Activated CD8-positive, alpha-beta T cell treated with anti-CD3 and anti-CD28 coated beads for 36 hours (primary cell): ENCODE measurements at regions of chr7 and their contacts with region 1.

Region 1: GRCh38 chr7:27160546-27161213 is 4.2 kb upstream of the HOXA7 start:
- DNase-seq: peak; percentile 89
- ATAC-seq: peak; percentile 78
- H3K4me3 Mint-ChIP-seq: peak overlapping the region; percentile 59
- H3K27ac Mint-ChIP-seq: no peak overlapping the region
- H3K4me1 Mint-ChIP-seq: peaks cover 27% of the 10 kb centered on the region
- H3K27me3 Mint-ChIP-seq: peaks cover 79% of the 10 kb centered on the region
- CTCF ChIP-seq: peak; percentile 98

Region 2: DNA sequence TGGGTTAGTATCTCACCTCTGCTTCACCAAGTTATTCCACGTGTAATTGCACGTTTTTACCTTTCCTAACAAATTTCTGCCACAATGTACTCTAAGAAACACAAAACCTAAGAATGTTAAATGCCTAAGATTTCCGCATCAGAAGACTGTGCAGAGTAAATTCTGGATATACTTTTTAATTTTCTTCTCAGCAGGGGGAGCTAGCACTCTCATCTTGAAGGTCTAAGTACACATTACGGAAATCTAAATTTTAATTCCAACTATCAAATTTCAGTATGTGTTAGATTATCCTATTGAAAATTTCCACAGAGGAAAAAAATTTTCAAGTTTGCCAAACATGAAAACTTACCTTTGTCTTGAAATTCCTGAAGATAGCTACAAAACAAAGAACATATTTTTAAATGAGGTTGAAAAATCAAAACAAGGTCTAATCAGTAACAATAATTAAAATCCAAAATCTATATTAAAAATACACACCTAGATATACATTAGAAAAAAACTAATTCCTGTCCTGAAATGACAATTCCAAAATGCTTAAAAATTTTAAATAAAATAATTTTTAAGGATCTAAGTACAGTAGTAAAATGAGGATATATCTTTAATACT is 306.8 kb before region 1 on chr7:
- CTCF ChIA-PET with region 1: interaction called, 6 read pairs
- POLR2A ChIA-PET with region 1: no interaction called
- intact Hi-C with region 1: loop called (anchors 2 kb)
- DNase-seq: no peak
- ATAC-seq: no peak
- H3K4me3 Mint-ChIP-seq: no peak overlapping the region
- H3K27ac Mint-ChIP-seq: no peak overlapping the region
- H3K4me1 Mint-ChIP-seq: peaks cover 7% of the 10 kb centered on the region
- H3K27me3 Mint-ChIP-seq: peaks cover 35% of the 10 kb centered on the region
- CTCF ChIP-seq: peak; percentile 54

Region 3: GRCh38 chr7:27046854-27047549 is 113.7 kb before region 1 on chr7:
- CTCF ChIA-PET with region 1: no interaction called
- POLR2A ChIA-PET with region 1: no interaction called
- intact Hi-C with region 1: no loop called
- DNase-seq: no peak
- ATAC-seq: no peak
- H3K4me3 Mint-ChIP-seq: no peak overlapping the region
- H3K27ac Mint-ChIP-seq: no peak overlapping the region
- H3K4me1 Mint-ChIP-seq: no peaks in the 10 kb centered on the region
- H3K27me3 Mint-ChIP-seq: peaks cover 7% of the 10 kb centered on the region
- CTCF ChIP-seq: no peak

Region 4: DNA sequence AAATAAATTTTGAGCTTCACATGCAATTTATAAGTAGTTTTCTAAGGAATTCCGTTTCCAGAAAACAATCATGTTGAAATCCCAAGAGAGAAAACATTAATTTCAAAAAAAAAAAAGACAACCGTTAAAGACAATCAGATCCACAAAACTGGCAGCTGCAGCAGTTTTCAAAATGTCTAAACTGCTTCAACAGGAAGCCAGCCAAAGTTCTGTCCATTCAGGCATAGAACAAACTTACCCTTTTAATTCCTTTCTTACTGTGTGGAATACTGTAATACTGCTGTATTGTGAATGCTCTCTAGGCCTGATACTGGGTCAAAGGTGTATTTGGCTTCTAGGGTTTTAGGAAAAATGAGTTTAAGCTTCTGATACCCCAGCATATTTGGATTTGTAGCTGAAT is 96.5 kb before region 1 on chr7:
- CTCF ChIA-PET with region 1: no interaction called
- POLR2A ChIA-PET with region 1: no interaction called
- intact Hi-C with region 1: no loop called
- DNase-seq: no peak
- ATAC-seq: no peak
- H3K4me3 Mint-ChIP-seq: no peak overlapping the region
- H3K27ac Mint-ChIP-seq: no peak overlapping the region
- H3K4me1 Mint-ChIP-seq: peaks cover 3% of the 10 kb centered on the region
- H3K27me3 Mint-ChIP-seq: peaks cover 10% of the 10 kb centered on the region
- CTCF ChIP-seq: no peak

Region 5: GRCh38 chr7:27179503-27180430 is 19.1 kb after region 1 on chr7:
- CTCF ChIA-PET with region 1: interaction called, 61 read pairs
- POLR2A ChIA-PET with region 1: interaction called, 3 read pairs
- intact Hi-C with region 1: no loop called
- DNase-seq: peak; percentile 73
- ATAC-seq: peak; percentile 78
- H3K4me3 Mint-ChIP-seq: no peak overlapping the region
- H3K27ac Mint-ChIP-seq: no peak overlapping the region
- H3K4me1 Mint-ChIP-seq: peaks cover 5% of the 10 kb centered on the region
- H3K27me3 Mint-ChIP-seq: peaks cover 68% of the 10 kb centered on the region
- CTCF ChIP-seq: peak; percentile 84

Region 6: GRCh38 chr7:27242555-27243339 is 82.1 kb after region 1 on chr7 and contains the start of gene EVX1:
- CTCF ChIA-PET with region 1: interaction called, 3 read pairs
- POLR2A ChIA-PET with region 1: no interaction called
- intact Hi-C with region 1: loop called (anchors 5 kb)
- DNase-seq: peak; percentile 72
- ATAC-seq: peak; percentile 53
- H3K4me3 Mint-ChIP-seq: no peak within 1 kb of the TSS
- H3K27ac Mint-ChIP-seq: no peak within 1 kb of the TSS
- H3K4me1 Mint-ChIP-seq: peaks cover 19% of the 10 kb centered on the region
- H3K27me3 Mint-ChIP-seq: peaks cover 80% of the 10 kb centered on the region
- CTCF ChIP-seq: no peak
- total RNA-seq, gene EVX1: not detected